HEK293T (cell line): ENCODE measurements at regions of chr12 and their contacts with region 1.

Region 1: GRCh38 chr12:10364815-10365622 is 24.8 kb downstream of the KLRK1 start:
- DNase-seq: peak; percentile 45

Region 2: GRCh38 chr12:10212201-10213131 is 152.6 kb before region 1 on chr12 and contains the start of gene GABARAPL1:
- CTCF ChIA-PET with region 1: no interaction called
- POLR2A ChIA-PET with region 1: interaction called, 15 read pairs
- DNase-seq: peak; percentile 92

Region 3: DNA sequence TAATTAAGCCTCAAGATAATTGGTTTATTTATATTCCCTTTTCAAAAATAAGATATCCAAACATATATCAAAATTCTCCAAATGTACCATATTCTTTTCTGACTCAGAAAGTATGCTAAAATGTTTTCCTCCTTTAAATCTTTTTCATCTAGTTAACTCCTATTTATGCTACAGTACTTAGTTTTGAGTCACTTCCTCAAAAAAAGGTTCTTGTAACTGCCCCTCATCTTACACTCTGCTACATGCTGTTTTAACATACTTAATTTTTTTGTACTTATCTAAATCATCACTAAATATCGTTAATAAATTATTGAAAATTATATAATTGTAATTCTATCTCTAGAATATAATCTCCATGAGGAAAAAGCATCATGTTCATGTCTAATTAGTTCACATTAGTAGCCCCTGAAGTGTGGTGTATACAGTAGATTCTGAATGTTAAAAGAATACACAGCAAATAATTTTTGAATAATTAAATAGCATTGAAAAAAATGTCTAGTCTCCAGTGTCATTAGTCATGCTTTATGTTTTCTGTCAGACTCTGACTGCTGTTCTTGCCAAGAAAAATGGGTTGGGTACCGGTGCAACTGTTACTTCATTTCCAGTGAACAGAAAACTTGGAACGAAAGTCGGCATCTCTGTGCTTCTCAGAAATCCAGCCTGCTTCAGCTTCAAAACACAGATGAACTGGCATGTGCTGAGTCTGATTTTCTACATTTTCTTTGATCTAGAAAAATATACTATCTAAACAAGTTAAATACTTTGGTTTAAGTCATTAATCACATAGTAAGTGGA is 53.9 kb before region 1 on chr12:
- CTCF ChIA-PET with region 1: no interaction called
- POLR2A ChIA-PET with region 1: no interaction called
- DNase-seq: no peak

Region 4: DNA sequence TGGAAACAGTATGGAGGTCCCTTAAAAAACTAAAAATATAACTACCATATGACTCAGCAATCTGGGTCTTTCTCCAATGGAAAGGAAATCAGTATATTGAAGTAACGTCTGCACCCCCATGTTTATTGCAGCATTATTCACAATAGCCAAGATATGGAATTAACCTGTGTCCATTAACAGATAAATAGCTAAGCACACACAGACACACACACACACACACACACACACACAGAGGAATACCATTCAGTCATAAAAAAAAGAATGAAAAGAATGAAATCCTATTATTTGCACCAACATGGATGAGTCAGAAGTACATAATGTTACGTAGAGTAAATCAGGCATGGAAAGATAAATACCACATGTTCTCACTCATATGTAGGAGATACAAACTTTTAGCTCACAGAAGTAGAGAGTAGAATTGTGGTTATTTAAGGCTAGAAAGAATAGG is 20.2 kb after region 1 on chr12:
- CTCF ChIA-PET with region 1: interaction called, 3 read pairs
- POLR2A ChIA-PET with region 1: interaction called, 11 read pairs
- DNase-seq: no peak

Region 5: GRCh38 chr12:10562306-10562933 is 197.4 kb after region 1 on chr12:
- CTCF ChIA-PET with region 1: interaction called, 12 read pairs
- POLR2A ChIA-PET with region 1: no interaction called
- DNase-seq: peak; percentile 23